ENCODE measurements at regions of chrX and their contacts with region 1.

Region 1: DNA sequence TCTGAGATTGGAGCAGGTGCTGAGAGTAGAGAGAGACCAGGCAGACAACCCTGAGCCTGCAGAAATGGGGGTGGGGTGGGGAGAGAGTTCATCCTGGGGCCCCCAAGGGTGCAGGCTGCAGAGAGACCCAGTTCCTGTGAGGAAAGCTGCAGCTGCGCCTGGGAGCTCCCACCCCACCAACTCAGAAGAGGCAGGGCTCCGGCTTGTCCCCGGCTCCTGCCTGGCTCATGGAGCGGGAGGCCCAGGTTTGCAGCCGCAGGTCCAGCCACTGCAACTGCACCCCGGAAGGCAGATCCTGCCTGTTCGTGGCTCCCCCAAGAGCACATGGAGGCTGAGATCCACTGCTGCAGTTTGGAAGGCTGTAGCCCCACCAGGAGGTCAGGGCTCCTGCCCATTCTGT is 44.2 kb upstream of the DGKK start:
- DNase-seq: no peak
- ATAC-seq: no peak
- H3K4me3 ChIP-seq: no peak overlapping the region
- H3K27ac ChIP-seq: no peak overlapping the region
- H3K4me1 ChIP-seq: no peaks in the 10 kb centered on the region
- H3K27me3 ChIP-seq: no peaks in the 10 kb centered on the region
- CTCF ChIP-seq: no peak
- POLR2A ChIP-seq: no peak

Region 2: GRCh38 chrX:50402881-50403280 is 111.9 kb before region 1 on chrX:
- in situ Hi-C with region 1: loop called in 1 of 4 experiments (anchors 25 kb)
- intact Hi-C with region 1: no loop called
- DNase-seq: no peak
- ATAC-seq: no peak
- H3K4me3 ChIP-seq: no peak overlapping the region
- H3K27ac ChIP-seq: no peak overlapping the region
- H3K4me1 ChIP-seq: no peaks in the 10 kb centered on the region
- H3K27me3 ChIP-seq: peaks cover 0 to 4% (median 0%) of the 10 kb centered on the region in 3 donors
- CTCF ChIP-seq: no peak
- POLR2A ChIP-seq: no peak

Region 3: DNA sequence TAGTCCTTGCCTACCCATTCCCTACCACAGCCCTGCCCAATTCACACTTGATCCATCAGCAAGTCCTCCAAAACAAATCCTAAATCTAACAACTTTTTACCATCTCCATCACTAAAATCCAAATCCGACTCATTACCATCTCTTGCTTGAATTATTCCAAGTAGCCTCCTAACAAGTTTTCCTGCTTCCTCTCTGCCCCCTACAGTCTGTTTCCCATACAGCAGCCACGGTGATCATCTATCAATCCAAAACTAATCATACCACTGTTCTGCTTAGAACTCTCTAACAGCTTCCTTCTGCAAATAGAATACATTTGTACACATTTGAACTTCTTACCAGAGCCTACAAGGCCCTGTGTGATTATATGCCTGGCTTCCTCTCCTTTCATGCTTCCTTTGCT is 166.2 kb after region 1 on chrX:
- in situ Hi-C with region 1: no loop called
- intact Hi-C with region 1: no loop called
- DNase-seq: no peak
- ATAC-seq: no peak
- H3K4me3 ChIP-seq: no peak overlapping the region
- H3K27ac ChIP-seq: no peak overlapping the region
- H3K4me1 ChIP-seq: no peaks in the 10 kb centered on the region
- H3K27me3 ChIP-seq: no peaks in the 10 kb centered on the region
- CTCF ChIP-seq: peak in 1 of 5 experiments; percentile 37
- POLR2A ChIP-seq: no peak

Region 4: GRCh38 chrX:51144852-51145442 is 630.1 kb after region 1 on chrX:
- in situ Hi-C with region 1: no loop called
- intact Hi-C with region 1: no loop called
- DNase-seq: no peak
- ATAC-seq: no peak
- H3K4me3 ChIP-seq: no peak overlapping the region
- H3K27ac ChIP-seq: no peak overlapping the region
- H3K4me1 ChIP-seq: no peaks in the 10 kb centered on the region
- H3K27me3 ChIP-seq: peaks cover 0 to 3% (median 0%) of the 10 kb centered on the region in 3 donors
- CTCF ChIP-seq: peak in 1 of 5 experiments; percentile 47
- POLR2A ChIP-seq: no peak